Activated CD8-positive, alpha-beta T cell treated with anti-CD3 and anti-CD28 coated beads, Interleukin-2, amount 10 ng/mL, durations not matched to agents 7 days and 5 days (primary cell): ENCODE measurements at regions of chr14 and their contacts with region 1.

Region 1: DNA sequence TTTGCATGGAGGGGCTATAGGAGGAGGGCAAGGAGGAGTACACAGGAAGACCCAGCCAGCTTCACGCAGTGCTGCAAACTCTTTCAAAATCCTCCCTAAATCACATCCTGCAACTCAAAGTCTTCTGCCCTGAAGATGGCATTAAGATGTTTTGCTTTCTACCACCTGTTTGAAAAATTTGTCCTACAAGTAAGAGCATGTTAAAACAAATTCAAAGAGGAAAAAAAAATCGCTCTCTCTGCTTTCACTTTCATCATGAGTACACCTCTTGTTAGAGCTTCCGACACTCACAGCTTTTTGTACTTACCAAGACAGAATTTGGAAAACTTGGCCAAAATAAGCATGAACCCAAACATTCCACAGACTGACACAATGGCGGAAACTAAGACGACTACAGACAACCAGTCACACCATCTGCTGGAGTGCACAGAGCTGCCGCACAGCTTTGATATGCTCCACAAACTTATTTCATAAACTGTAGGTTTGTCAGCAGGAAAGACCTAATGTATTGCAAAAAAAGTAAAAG is 21.3 kb downstream of the GCH1 start:
- DNase-seq: peak; percentile 51
- ATAC-seq: peak; percentile 73
- H3K4me3 Mint-ChIP-seq: peak overlapping the region; percentile 83
- H3K27ac Mint-ChIP-seq: peak overlapping the region; percentile 97
- H3K4me1 Mint-ChIP-seq: peaks cover 52% of the 10 kb centered on the region
- H3K27me3 Mint-ChIP-seq: no peaks in the 10 kb centered on the region

Region 2: GRCh38 chr14:54606178-54606577 is 275.1 kb before region 1 on chr14:
- CTCF ChIA-PET with region 1: no interaction called
- POLR2A ChIA-PET with region 1: no interaction called
- DNase-seq: no peak
- ATAC-seq: no peak
- H3K4me3 Mint-ChIP-seq: no peak overlapping the region
- H3K27ac Mint-ChIP-seq: no peak overlapping the region
- H3K4me1 Mint-ChIP-seq: no peaks in the 10 kb centered on the region
- H3K27me3 Mint-ChIP-seq: peaks cover 3% of the 10 kb centered on the region

Region 3: DNA sequence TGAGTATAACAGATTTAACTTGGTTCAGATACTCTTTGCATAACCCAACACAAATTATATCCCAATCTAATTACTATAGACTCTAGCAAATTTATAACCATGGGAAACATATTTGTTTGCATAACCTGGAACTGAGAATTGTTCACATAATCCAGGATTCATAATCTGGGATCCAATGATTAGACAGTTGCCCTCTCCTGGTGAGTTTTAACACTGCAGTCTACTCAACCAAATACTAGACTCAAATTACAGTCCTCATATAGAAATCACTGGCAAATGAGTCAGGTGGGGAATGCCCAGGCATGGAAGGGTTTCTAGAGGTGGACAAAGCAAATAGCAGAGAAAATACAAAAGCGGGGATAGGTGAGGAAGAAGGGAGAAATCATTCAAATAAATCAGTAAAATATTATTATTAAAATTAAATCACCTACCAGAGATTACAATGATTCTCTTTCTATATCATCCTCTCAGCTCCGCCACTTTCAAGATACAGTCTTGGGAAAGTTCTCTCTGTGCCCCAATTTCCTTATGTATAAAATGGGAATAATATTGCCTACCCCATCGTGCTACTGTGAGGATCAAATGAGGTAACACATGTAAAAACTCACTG is 12.0 kb after region 1 on chr14:
- CTCF ChIA-PET with region 1: interaction called, 42 read pairs
- POLR2A ChIA-PET with region 1: interaction called, 3 read pairs
- DNase-seq: peak; percentile 39
- ATAC-seq: peak; percentile 48
- H3K4me3 Mint-ChIP-seq: no peak overlapping the region
- H3K27ac Mint-ChIP-seq: no peak overlapping the region
- H3K4me1 Mint-ChIP-seq: peaks cover 43% of the 10 kb centered on the region
- H3K27me3 Mint-ChIP-seq: no peaks in the 10 kb centered on the region

Region 4: DNA sequence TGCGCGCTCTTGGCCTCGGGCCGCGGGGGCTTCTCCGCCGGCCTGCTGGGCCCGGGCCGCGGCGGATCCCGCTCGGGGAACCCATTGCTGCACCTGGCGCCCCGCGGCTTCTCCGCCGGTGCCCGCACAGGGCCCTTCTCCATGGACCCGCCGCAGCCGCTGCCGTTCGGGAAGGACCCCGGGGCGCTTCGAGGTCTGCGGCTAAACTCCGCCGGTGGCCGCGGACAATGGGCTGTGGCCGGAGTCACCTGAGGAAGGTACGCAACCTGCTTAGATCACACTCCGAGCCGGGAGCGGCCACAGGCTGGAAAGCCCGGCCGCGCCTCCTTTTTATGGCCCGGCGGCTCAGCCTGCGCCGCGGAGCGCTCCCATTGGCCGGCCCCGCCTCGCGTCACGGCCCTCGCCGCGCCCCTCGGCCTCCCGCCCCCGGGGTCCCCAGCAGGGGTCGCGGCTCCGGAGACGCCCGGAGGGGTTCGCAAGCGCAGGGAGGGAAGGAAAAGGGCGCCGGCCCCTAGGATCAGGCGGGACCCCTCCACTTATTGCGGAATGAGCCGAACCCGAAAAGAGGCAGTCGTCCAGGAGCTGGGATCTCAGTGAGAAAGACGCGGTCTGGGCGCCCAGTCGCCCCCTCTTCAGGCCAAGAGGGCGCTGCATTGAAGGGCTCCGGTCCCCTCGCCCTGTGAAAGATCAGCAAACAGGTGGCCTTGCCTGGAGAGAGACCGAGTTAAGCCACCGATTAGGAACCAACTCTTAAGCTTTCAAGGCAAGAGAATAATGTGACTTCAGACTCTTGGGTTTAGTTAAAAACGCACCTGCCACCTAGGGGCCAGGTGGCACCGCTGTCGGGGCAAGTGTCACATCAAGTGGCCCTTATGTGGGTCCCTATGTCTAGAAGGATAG is 21.5 kb after region 1 on chr14 and contains the start of gene GCH1:
- CTCF ChIA-PET with region 1: interaction called, 39 read pairs
- POLR2A ChIA-PET with region 1: interaction called, 26 read pairs
- DNase-seq: peak; percentile 79
- ATAC-seq: peak; percentile 81
- H3K4me3 Mint-ChIP-seq: peak within 1 kb of the TSS; percentile 90
- H3K27ac Mint-ChIP-seq: peak within 1 kb of the TSS; percentile 91
- H3K4me1 Mint-ChIP-seq: peaks cover 48% of the 10 kb centered on the region
- H3K27me3 Mint-ChIP-seq: no peaks in the 10 kb centered on the region
- total RNA-seq, gene GCH1: 51.4 to 52.3 TPM

Region 5: GRCh38 chr14:54929556-54929955 is 48.3 kb after region 1 on chr14:
- CTCF ChIA-PET with region 1: no interaction called
- POLR2A ChIA-PET with region 1: no interaction called
- DNase-seq: no peak
- ATAC-seq: no peak
- H3K4me3 Mint-ChIP-seq: no peak overlapping the region
- H3K27ac Mint-ChIP-seq: no peak overlapping the region
- H3K4me1 Mint-ChIP-seq: peaks cover 8% of the 10 kb centered on the region
- H3K27me3 Mint-ChIP-seq: no peaks in the 10 kb centered on the region